Right cardiac atrium (tissue), 5 donors: ENCODE measurements at regions of chr5 and their contacts with region 1.

Region 1: GRCh38 chr5:138615461-138615860 is 40.3 kb upstream of the HSPA9 start:
- DNase-seq: no peak
- ATAC-seq: no peak
- H3K4me3 ChIP-seq: no peak overlapping the region
- H3K27ac ChIP-seq: no peak overlapping the region
- H3K4me1 ChIP-seq: no peaks in the 10 kb centered on the region
- H3K27me3 ChIP-seq: no peaks in the 10 kb centered on the region

Region 2: GRCh38 chr5:138663009-138663408 is 47.5 kb after region 1 on chr5:
- intact Hi-C with region 1: loop called in 1 of 4 experiments (anchors 2 kb)
- DNase-seq: no peak
- ATAC-seq: no peak
- H3K4me3 ChIP-seq: no peak overlapping the region
- H3K27ac ChIP-seq: no peak overlapping the region
- H3K4me1 ChIP-seq: peaks cover 6% of the 10 kb centered on the region
- H3K27me3 ChIP-seq: no peaks in the 10 kb centered on the region